ENCODE measurements at regions of chr11 and their contacts with region 1.

Region 1: GRCh38 chr11:113781679-113782078 is 2.1 kb downstream of the CLDN25 start:
- DNase-seq: no peak
- H3K4me3 ChIP-seq: no peak overlapping the region
- H3K27ac ChIP-seq: no peak overlapping the region
- H3K4me1 ChIP-seq: no peaks in the 10 kb centered on the region
- H3K27me3 ChIP-seq: peaks cover 10 to 15% of the 10 kb centered on the region in 2 experiments
- CTCF ChIP-seq: no peak
- POLR2A ChIP-seq: no peak

Region 2: GRCh38 chr11:113752932-113753331 is 28.7 kb before region 1 on chr11:
- CTCF ChIA-PET with region 1: no interaction called
- POLR2A ChIA-PET with region 1: no interaction called
- dilution Hi-C with region 1: no loop called
- intact Hi-C with region 1: no loop called
- DNase-seq: no peak
- H3K4me3 ChIP-seq: no peak overlapping the region
- H3K27ac ChIP-seq: no peak overlapping the region
- H3K4me1 ChIP-seq: no peaks in the 10 kb centered on the region
- H3K27me3 ChIP-seq: no peaks in the 10 kb centered on the region
- CTCF ChIP-seq: no peak
- POLR2A ChIP-seq: no peak

Region 3: GRCh38 chr11:113796663-113797259 is 15.1 kb after region 1 on chr11:
- CTCF ChIA-PET with region 1: interaction called, 23 read pairs
- POLR2A ChIA-PET with region 1: no interaction called
- dilution Hi-C with region 1: no loop called
- intact Hi-C with region 1: no loop called
- DNase-seq: peak; percentile 49
- H3K4me3 ChIP-seq: no peak overlapping the region
- H3K27ac ChIP-seq: no peak overlapping the region
- H3K4me1 ChIP-seq: no peaks in the 10 kb centered on the region
- H3K27me3 ChIP-seq: no peaks in the 10 kb centered on the region
- CTCF ChIP-seq: peak; percentile 45 to 62
- POLR2A ChIP-seq: no peak